ENCODE measurements at regions of chr21 and their contacts with region 1.

Region 1: DNA sequence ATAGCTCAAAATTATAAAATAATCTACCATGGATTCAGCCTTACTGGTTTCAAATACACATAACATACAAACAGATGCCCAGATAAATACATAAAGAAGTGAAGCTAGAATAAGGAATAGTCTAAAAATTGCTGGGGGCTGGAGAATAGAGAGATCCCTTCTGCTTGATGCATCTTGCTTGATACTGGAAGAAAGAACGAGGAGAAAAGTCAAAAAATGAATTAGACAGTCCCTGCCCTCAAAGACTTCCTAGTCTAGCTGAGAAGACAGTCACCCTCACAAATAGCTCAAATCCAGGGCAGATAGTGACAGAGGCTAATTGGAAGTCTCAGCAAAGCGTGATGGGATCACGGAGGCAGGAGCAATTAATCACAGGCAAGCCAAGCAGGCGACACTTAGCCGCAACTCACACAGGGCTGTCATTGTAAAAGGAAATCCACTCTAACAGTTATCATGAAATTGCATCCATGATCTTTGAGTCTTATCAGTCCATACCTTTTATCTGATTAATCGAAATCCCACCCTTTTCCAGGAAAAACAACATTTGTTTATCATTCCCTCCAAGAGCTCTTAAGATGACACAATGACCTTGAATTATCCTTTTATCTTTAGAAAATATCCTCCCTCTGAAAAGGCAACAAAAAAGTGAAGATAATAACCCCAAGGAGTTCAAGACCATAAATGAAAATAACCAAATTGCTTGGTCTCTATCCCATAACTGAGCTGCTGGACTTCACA is 59.7 kb upstream of the TIAM1 start:
- DNase-seq: no peak
- H3K4me3 ChIP-seq: no peak overlapping the region
- H3K27ac ChIP-seq: no peak overlapping the region
- H3K4me1 ChIP-seq: peaks cover 20% of the 10 kb centered on the region
- CTCF ChIP-seq: no peak

Region 2: DNA sequence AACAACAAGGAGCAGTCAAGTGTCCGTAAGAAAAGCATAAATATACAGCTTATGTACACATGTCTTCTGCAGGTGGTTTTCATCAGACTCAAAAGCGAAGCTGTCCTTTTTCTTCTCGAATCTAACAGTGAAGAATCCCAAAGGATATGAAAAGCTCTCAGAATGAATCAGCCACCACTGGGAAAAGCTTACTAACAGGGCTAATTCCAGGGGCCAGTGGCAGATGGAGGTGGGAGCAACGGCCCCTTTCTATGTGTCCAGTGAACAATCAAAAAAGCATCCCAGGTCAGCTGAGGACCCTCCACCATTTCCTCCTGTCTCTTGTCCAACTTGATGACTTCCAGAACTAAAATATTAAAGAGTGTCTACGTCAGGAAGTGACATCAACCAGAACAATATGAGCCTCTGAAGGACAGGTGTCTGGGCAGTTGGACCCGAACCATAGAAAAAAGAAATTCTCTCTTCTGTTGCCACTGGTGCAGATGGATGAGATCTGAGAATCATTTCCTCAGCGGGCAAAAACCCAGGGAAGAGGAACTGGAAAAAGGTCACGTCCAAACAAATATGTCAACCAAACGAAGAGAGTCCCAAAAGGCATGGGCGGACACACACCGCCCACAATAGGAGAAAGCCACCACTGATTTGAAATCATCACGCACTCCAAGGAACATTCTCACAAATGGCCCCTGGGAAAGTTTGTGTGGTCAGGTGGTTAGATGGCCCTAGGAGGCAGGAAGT is 10.7 kb after region 1 on chr21:
- CTCF ChIA-PET with region 1: no interaction called
- POLR2A ChIA-PET with region 1: interaction called, 11 read pairs
- intact Hi-C with region 1: no loop called
- DNase-seq: no peak
- H3K4me3 ChIP-seq: no peak overlapping the region
- H3K27ac ChIP-seq: no peak overlapping the region
- H3K4me1 ChIP-seq: peaks cover 18% of the 10 kb centered on the region
- CTCF ChIP-seq: no peak

Measured in OCI-LY7 (cell line).